Breast epithelium (tissue), 4 donors: ENCODE measurements at regions of chr21 and their contacts with region 1.

Region 1: GRCh38 chr21:46457801-46458314 is 833 bp upstream of the DIP2A start:
- DNase-seq: no peak
- H3K4me3 ChIP-seq: peak overlapping the region; percentile 96
- H3K27ac ChIP-seq: peak overlapping the region; percentile 85 to 88
- H3K4me1 ChIP-seq: peaks cover 0 to 3% of the 10 kb centered on the region in 2 donors
- H3K27me3 ChIP-seq: no peaks in the 10 kb centered on the region
- CTCF ChIP-seq: no peak
- POLR2A ChIP-seq: no peak

Region 2: GRCh38 chr21:46356494-46357334 is 101.1 kb before region 1 on chr21:
- intact Hi-C with region 1: no loop called
- DNase-seq: no peak
- H3K4me3 ChIP-seq: no peak overlapping the region
- H3K27ac ChIP-seq: no peak overlapping the region
- H3K4me1 ChIP-seq: no peaks in the 10 kb centered on the region
- H3K27me3 ChIP-seq: no peaks in the 10 kb centered on the region
- CTCF ChIP-seq: no peak
- POLR2A ChIP-seq: no peak

Region 3: DNA sequence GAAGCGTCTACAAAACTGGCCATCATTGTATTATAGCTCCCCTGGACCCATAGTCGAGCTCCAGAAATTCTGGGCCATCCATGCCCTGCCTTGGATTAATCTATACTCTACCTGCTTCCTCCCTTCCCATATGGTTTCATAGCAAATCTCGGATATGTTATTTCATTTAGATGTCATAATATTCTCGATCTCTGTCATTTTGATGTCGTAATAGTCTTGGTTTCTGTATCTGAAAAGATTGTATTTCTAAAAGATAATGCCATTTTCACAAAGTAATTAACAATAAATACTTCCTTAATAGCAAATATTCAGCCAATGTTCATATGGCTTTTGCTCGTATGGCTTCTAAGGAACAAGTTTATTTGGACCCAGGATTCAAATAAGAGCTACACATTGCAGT is 36.0 kb after region 1 on chr21:
- intact Hi-C with region 1: loop called (anchors 2 kb)
- DNase-seq: no peak
- H3K4me3 ChIP-seq: no peak overlapping the region
- H3K27ac ChIP-seq: no peak overlapping the region
- H3K4me1 ChIP-seq: no peaks in the 10 kb centered on the region
- H3K27me3 ChIP-seq: no peaks in the 10 kb centered on the region
- CTCF ChIP-seq: no peak
- POLR2A ChIP-seq: no peak